PC-9 (cell line): ENCODE measurements at regions of chr22 and their contacts with region 1.

Region 1: GRCh38 chr22:37599153-37599552 is 9.5 kb upstream of the GGA1 start:
- DNase-seq: peak; percentile 19 to 40
- H3K4me3 ChIP-seq: no peak overlapping the region
- H3K27ac ChIP-seq: no peak overlapping the region
- H3K4me1 ChIP-seq: peaks cover 48% of the 10 kb centered on the region
- H3K27me3 ChIP-seq: no peaks in the 10 kb centered on the region
- CTCF ChIP-seq: no peak

Region 2: DNA sequence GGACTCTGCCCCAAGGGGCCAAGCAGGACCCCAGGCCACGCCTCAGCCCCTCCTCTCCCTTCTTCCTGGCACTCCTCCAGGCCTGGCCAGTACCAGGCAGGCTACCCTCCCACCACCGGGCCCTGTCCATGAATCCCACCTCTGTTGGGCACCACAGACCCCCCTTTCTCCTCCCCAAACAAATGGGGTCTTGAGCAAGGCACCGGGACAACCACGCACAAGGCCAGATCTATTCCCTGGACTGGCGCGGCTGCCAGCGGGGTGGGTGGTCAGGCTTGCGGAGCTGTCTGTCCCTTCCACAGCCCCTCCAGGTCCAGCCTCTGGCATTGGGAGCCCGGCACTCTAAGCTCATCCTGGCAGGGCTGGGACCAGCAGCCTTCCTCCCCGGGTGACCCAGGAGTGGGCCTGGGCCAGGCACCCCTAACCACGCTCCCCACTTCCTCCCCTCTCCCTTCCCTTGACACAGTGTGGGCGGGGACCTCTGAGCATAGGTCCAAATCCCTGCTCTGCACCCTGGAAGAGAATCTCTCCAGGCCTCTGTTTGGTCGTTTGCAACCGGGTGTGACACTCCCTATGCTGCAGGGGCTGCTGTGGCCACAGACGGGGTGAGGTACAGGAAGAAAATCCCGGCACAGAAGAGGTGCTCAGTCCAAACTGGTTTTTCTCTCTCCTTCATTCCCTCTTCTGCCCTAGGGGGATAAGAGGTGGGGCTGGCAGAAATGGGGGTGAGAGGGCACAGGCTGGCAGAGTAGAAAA is 186.5 kb before region 1 on chr22:
- CTCF ChIA-PET with region 1: no interaction called
- POLR2A ChIA-PET with region 1: interaction called, 11 read pairs
- intact Hi-C with region 1: no loop called
- DNase-seq: peak; percentile 62 to 90
- H3K4me3 ChIP-seq: peak overlapping the region; percentile 22; the same call in 1 of the 2 replicates
- H3K27ac ChIP-seq: peak overlapping the region; percentile 72
- H3K4me1 ChIP-seq: peaks cover 28% of the 10 kb centered on the region
- H3K27me3 ChIP-seq: no peaks in the 10 kb centered on the region
- CTCF ChIP-seq: 0 out of 2 replicates have a peak, but pooled peaks have one; percentile 8

Region 3: GRCh38 chr22:37492428-37493344 is 106.5 kb before region 1 on chr22:
- CTCF ChIA-PET with region 1: interaction called, 22 read pairs
- POLR2A ChIA-PET with region 1: no interaction called
- intact Hi-C with region 1: no loop called
- DNase-seq: peak; percentile 38 to 52
- H3K4me3 ChIP-seq: no peak overlapping the region
- H3K27ac ChIP-seq: no peak overlapping the region
- H3K4me1 ChIP-seq: peaks cover 9% of the 10 kb centered on the region; the same call in 1 of the 2 replicates
- H3K27me3 ChIP-seq: no peaks in the 10 kb centered on the region
- CTCF ChIP-seq: peak; percentile 72